Activated T-helper 1 cell treated with anti-CD3 and anti-CD28 coated beads, Interleukin-12 subunit alpha, Interleukin-12 subunit beta, Interleukin-2, Interleukin-4 antibody, amounts not matched to agents 30 ng/mL and 10 ng/mL and 1 ng/mL, durations not matched to agents 14 hours and 24 hours and 36 hours (primary cell): ENCODE measurements at regions of chr17 and their contacts with region 1.

Region 1: DNA sequence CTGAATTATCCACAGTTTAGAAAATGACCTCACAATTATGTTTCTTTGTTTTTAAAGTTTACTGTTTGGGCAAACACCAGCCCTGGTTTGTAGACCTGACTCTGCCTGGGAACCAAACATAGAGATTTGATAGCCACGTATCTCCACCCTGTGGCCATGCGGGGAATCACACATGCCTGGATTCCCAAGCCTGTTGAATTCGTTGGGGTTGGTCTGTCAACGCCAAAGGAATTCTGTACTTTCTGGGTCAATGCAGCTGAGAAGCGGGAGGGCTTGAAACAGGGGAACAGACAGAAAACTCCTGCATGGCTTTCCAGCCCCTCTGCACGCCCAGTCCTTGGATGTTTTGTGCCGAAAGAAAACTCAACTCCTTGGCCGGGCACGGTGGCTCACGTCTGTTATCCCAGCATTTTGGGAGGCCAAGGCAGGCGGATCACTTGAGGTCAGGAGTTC is 27.0 kb downstream of the CD300A start:
- DNase-seq: peak; percentile 48
- H3K4me3 Mint-ChIP-seq: no peak overlapping the region
- H3K27ac Mint-ChIP-seq: no peak overlapping the region
- H3K4me1 Mint-ChIP-seq: peaks cover 20% of the 10 kb centered on the region
- H3K27me3 Mint-ChIP-seq: peaks cover 12% of the 10 kb centered on the region

Region 2: GRCh38 chr17:74296548-74296936 is 196.9 kb before region 1 on chr17:
- intact Hi-C with region 1: loop called (anchors 1 kb)
- DNase-seq: peak; percentile 24
- H3K4me3 Mint-ChIP-seq: no peak overlapping the region
- H3K27ac Mint-ChIP-seq: no peak overlapping the region
- H3K4me1 Mint-ChIP-seq: peaks cover 21% of the 10 kb centered on the region
- H3K27me3 Mint-ChIP-seq: peaks cover 11% of the 10 kb centered on the region

Region 3: DNA sequence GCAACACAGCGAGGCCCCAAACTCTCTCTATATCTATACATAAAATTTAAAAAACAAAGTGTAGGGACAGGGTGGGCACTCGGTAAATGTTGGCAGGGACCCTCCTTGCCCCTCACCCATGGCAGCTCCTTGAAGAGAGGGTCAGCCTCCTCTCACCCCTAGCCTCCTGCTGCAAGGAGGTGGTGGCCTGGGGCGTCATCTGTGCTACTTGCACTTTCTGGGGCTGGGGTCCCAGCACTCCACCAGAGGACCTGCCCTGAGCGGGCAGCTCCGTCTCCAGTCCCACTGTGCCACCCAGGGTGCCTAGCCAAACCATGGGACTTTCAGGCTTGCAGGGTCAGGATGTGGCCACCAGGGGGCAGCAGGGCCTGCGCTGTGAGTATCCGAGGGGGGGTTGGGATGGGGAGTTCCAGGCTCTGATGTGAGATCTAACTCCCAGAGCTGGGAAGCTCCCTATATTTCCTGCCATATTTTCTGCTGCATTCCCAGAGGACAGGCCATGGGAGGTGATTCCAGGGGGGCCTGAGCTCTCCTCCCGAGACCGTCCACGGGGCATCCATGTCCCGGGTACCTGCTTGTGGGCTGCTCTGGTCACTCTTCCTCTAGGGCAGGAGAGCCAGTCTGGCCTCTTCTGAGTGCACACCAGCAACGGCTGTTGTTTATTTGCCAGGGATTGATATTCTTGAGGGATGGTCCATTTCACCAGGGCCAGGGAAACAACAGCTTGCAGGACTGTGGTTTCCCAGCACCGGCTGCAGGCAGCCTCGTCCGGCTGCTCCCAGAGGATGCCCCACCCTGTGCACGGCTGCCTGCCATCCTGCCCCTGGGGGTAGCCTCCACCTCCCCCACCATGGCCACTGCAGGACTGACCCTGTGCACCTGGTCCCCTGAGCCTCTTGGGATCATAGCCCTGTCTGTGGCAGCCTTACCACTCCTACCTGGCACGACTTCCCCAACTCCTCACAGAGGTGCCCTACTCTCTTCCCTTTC is 125.0 kb before region 1 on chr17:
- intact Hi-C with region 1: loop called (anchors 1 kb)
- DNase-seq: peak; percentile 51
- H3K4me3 Mint-ChIP-seq: no peak overlapping the region
- H3K27ac Mint-ChIP-seq: no peak overlapping the region
- H3K4me1 Mint-ChIP-seq: peaks cover 18% of the 10 kb centered on the region
- H3K27me3 Mint-ChIP-seq: peaks cover 9% of the 10 kb centered on the region

Region 4: DNA sequence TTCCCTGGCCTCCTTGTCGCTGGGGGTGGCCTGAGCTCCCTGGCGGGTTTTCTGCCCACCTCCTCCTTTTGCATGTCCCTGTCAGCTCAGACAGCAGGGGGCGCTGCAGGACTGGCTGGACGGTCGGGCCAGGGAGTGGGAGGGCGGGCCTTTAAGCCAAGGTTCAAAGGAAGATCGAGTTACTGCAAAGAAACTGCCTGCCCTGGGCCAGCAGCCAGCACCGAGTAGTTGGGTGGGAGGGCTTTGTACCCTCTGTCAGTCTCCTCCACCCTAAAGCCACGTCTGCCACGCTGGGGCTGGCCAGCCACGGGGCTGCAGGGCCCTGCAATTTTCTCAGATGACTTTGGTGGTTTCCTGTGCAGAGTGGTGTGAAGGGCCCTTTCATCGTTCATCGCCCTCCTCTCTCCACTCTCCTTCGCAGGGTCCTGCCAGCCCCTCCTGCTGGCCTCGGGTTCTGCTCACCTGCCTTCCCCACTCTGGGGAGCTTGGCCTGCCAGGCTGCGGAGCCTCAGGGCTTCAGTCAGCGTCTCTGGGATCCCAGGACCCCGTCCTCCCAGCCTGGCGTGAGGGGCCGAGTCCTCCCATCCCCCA is 113.8 kb before region 1 on chr17:
- intact Hi-C with region 1: loop called (anchors 1 kb)
- DNase-seq: peak; percentile 83
- H3K4me3 Mint-ChIP-seq: no peak overlapping the region
- H3K27ac Mint-ChIP-seq: no peak overlapping the region
- H3K4me1 Mint-ChIP-seq: no peaks in the 10 kb centered on the region
- H3K27me3 Mint-ChIP-seq: peaks cover 7% of the 10 kb centered on the region

Region 5: GRCh38 chr17:74437702-74438101 is 55.7 kb before region 1 on chr17:
- intact Hi-C with region 1: loop called (anchors 1 kb)
- DNase-seq: no peak
- H3K4me3 Mint-ChIP-seq: no peak overlapping the region
- H3K27ac Mint-ChIP-seq: no peak overlapping the region
- H3K4me1 Mint-ChIP-seq: no peaks in the 10 kb centered on the region
- H3K27me3 Mint-ChIP-seq: peaks cover 26% of the 10 kb centered on the region

Region 6: DNA sequence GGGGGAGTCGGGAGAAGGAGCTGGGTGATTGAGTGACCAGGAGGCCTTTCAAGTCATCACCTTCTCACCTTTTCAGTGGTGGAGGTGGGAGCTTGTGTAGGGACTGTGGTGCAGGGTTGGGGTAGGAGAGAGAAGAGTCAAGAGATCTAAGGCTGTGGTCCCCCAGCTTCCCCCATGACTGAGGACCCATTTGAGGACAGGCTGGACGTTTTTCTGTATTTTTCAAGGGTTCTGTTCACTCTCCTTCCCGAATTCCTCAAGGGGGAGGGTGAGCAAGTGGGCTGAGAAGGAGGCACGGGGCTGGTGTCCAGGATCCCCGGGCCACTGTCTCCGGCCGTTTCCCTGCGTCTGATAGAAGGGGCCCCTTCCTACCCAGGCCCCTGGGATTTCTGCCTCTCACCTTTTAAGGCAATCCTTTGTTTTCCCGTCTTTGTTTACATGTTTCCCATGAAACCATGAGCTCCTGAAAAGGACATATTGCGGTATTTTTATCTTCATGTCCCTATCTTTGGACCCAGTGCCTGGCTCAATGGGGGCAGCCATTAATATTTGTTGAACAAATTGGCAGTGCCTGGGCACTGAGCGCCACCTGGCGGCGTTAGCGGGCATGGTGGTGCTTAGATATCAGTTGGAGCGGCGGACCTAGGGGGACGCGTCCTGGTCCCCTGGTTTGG is 36.1 kb before region 1 on chr17:
- intact Hi-C with region 1: loop called (anchors 1 kb)
- DNase-seq: peak; percentile 54
- H3K4me3 Mint-ChIP-seq: no peak overlapping the region
- H3K27ac Mint-ChIP-seq: peak overlapping the region; percentile 23
- H3K4me1 Mint-ChIP-seq: peaks cover 28% of the 10 kb centered on the region
- H3K27me3 Mint-ChIP-seq: peaks cover 10% of the 10 kb centered on the region

Region 7: GRCh38 chr17:74528491-74529199 is 35.2 kb after region 1 on chr17:
- intact Hi-C with region 1: loop called (anchors 1 kb)
- DNase-seq: no peak
- H3K4me3 Mint-ChIP-seq: no peak overlapping the region
- H3K27ac Mint-ChIP-seq: no peak overlapping the region
- H3K4me1 Mint-ChIP-seq: peaks cover 6% of the 10 kb centered on the region
- H3K27me3 Mint-ChIP-seq: peaks cover 33% of the 10 kb centered on the region